Psoas muscle (tissue), 8 donors: ENCODE measurements at regions of chr18 and their contacts with region 1.

Region 1: DNA sequence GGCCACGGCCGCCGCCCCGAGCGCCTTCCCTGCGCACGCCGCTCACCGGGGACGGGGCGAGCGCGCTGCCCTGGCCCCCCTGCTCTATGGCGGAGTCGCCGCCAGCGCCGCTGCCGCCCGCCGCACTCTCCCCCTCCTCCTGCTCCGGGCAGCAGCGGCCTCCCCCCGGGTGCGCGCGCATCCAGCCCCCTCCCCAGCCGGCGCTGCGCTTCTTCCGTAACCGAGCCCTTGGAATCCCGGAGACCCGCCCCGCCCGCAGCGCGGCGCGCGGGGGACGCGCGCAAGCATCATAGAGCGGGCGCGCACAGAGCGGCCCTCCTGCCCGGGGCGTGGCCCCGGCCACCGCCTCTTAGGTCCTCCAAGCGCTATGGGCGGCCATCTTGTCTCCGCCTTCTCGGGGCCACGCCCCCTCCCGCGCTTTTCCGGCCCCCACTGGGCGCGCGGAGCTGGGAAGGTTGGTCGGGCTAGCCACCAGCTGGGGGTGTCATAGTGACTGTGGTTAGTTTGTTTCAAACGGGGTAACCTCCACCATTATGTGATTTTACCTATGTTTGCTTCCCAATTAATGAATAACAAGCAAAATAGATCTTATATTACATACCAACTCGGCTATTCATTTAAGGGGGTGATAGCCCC is at the start of gene MBD2:
- DNase-seq: peak; percentile 95 to 97
- ATAC-seq: peak; percentile 99 to 100 (median 100)
- H3K4me3 ChIP-seq: peak within 1 kb of the TSS; percentile 74
- H3K27ac ChIP-seq: peak within 1 kb of the TSS; percentile 67
- H3K4me1 ChIP-seq: peaks cover 19% of the 10 kb centered on the region
- H3K27me3 ChIP-seq: no peaks in the 10 kb centered on the region
- CTCF ChIP-seq: peak; percentile 12
- total RNA-seq, gene MBD2: 26.9 to 44.7 (median 31.2) TPM

Region 2: DNA sequence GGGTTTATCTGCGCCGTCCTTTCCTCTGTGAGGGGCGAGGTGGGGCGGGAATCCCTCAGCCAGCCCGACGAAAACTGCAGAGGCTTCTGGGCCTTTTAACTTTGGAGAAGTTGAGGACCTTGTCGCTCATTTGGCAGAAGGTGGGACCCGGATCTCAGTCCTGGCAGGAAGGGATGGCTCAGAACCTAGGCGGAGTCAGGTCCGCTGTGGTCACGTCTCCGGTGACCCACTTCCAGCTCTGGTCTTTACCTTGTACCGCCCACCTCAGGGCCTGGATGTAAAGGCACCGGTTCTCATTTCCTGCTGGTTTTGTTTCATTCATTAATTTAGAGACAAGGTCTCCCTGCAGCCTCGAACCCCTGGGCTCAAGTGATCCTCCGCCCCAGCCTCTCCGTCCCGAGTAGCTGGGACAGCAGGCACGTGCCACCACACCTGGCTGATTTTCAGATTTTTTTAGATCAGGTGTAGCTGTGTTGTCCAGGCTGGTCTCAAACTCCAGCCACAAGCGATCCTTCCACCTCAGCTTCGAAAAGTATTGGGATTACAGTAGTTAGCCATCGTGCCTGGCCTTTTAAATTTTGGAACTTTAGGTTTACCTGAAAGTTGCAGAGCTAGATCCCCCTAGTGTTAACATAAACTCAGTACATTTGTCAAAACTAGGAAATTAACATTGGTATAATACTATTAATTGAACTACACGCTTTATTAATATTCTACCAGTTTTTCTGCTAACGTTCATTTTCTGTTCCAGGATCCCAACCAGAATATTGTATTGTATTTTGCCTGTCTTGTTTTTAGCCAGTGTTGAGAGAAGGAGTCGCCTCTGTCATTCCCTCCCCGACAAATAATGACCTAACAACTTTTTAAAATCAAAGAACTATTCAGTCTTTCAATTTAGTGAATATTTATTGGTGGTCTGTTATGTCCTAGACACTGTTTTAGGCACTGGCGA is 45.7 kb after region 1 on chr18:
- intact Hi-C with region 1: loop called (anchors 1 to 5 kb)
- DNase-seq: no peak
- ATAC-seq: peak; percentile 59 to 66 (median 60)
- H3K4me3 ChIP-seq: peak overlapping the region; percentile 76
- H3K27ac ChIP-seq: peak overlapping the region; percentile 87
- H3K4me1 ChIP-seq: peaks cover 4% of the 10 kb centered on the region
- H3K27me3 ChIP-seq: no peaks in the 10 kb centered on the region
- CTCF ChIP-seq: peak; percentile 34

Region 3: GRCh38 chr18:54284981-54285785 is 60.7 kb after region 1 on chr18:
- intact Hi-C with region 1: no loop called
- DNase-seq: peak in 1 of 2 donors; percentile 48
- ATAC-seq: peak; percentile 71 to 94 (median 89)
- H3K4me3 ChIP-seq: no peak overlapping the region
- H3K27ac ChIP-seq: no peak overlapping the region
- H3K4me1 ChIP-seq: no peaks in the 10 kb centered on the region
- H3K27me3 ChIP-seq: no peaks in the 10 kb centered on the region
- CTCF ChIP-seq: no peak